Gastrocnemius medialis (tissue), 4 donors: ENCODE measurements at regions of chr9 and their contacts with region 1.

Region 1: DNA sequence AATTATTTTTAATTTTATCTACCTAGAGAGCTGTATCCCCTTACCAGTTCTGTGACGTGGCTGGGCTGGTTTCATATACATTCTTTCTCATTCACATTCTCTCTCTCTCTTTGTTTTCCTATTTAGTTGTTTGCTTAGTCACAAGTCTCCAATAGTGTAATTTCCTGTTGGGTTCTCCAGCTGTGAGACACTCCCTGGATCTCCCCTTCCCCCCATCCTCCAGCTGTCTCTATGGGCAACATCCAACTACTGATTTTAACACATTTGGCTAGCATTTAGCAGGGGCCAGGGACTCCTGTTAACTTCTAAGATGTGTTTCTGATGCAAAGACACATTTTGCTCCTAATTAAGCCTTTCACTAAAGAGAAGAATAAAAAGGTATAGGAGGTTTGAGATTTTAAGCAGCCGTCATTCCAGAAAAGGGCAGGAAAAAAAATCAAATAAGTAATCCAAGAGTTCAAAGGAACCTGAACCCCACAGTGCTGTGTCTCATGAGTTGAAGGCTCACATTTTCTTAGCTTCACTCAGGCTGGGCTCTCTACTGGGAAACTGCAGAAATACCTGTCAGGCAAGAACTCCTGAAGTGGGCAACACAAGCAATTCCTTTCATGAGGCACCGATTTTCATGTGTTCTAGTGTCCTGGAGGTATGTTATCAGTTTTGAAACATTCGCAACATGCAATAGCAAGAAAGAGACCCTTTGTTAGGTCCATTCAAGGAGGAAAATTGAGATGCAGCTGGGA is 198.7 kb upstream of the C9orf72 start:
- DNase-seq: no peak
- ATAC-seq: no peak
- H3K4me3 ChIP-seq: no peak overlapping the region
- H3K27ac ChIP-seq: no peak overlapping the region
- H3K4me1 ChIP-seq: no peaks in the 10 kb centered on the region
- H3K27me3 ChIP-seq: no peaks in the 10 kb centered on the region
- CTCF ChIP-seq: no peak
- POLR2A ChIP-seq: no peak

Region 2: DNA sequence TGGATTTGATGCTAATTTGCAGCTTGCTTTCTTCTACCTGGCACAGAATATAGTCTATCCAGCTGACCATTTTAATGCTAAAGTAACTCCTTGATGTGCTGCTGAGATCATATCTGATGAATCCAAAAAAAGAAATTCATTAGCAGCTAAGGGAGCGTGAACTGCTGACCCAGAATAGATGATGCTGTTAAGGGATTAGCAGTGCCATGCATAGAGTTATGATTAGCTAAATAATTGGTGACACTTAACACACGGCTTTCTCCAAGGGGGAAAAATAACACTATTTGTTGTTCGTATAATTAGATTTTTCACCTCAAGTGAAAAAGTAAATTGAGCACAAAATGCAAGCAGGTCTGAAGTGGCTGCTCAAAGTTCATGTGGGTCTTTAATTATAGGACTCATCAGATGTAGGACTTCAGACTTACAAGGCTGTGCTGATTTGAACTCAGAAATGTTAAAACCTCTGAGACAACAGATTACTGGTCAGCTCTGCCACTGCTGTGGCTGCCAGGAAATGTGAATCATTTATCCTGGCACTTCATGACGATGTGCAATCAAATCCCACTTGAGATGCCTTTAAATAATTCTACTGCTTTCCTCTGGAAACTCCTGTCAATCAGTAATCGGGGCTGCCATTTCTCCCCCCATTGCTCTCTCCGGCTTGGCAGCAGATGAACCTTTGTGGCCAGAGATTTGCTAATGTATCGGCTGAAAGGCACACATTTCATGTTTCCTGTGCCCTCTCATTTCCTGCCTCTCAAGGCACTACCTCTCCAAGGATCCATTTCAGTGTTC is 92.9 kb after region 1 on chr9:
- in situ Hi-C with region 1: loop called in 1 of 4 experiments (anchors 25 kb)
- intact Hi-C with region 1: no loop called
- DNase-seq: no peak
- ATAC-seq: no peak
- H3K4me3 ChIP-seq: no peak overlapping the region
- H3K27ac ChIP-seq: no peak overlapping the region
- H3K4me1 ChIP-seq: no peaks in the 10 kb centered on the region
- H3K27me3 ChIP-seq: no peaks in the 10 kb centered on the region
- CTCF ChIP-seq: no peak
- POLR2A ChIP-seq: no peak

Region 3: DNA sequence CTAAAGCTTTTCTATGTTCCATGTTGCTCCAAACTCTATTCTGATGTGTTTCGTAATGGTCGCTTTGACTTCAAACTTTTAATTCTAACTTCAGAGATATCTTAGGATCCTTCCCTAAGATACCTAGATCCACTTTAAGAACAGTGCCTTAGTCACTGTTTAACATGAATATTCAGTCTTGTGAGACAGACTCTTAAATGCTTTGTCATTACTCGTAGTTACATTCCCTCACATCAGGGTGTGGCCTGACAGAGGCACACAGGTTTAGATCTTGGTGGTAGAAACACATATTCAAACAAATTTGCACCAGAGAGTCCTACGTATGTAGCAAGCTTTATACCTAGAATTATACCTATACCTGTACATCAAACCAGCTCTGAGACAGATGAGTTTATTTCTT is 488.4 kb after region 1 on chr9:
- in situ Hi-C with region 1: no loop called
- intact Hi-C with region 1: no loop called
- DNase-seq: no peak
- ATAC-seq: no peak
- H3K4me3 ChIP-seq: no peak overlapping the region
- H3K27ac ChIP-seq: no peak overlapping the region
- H3K4me1 ChIP-seq: no peaks in the 10 kb centered on the region
- H3K27me3 ChIP-seq: no peaks in the 10 kb centered on the region
- CTCF ChIP-seq: no peak
- POLR2A ChIP-seq: no peak